Activated B cell treated with CpG ODN at 0.5 μM for 24 hours (primary cell): ENCODE measurements at regions of chr2 and their contacts with region 1.

Region 1: DNA sequence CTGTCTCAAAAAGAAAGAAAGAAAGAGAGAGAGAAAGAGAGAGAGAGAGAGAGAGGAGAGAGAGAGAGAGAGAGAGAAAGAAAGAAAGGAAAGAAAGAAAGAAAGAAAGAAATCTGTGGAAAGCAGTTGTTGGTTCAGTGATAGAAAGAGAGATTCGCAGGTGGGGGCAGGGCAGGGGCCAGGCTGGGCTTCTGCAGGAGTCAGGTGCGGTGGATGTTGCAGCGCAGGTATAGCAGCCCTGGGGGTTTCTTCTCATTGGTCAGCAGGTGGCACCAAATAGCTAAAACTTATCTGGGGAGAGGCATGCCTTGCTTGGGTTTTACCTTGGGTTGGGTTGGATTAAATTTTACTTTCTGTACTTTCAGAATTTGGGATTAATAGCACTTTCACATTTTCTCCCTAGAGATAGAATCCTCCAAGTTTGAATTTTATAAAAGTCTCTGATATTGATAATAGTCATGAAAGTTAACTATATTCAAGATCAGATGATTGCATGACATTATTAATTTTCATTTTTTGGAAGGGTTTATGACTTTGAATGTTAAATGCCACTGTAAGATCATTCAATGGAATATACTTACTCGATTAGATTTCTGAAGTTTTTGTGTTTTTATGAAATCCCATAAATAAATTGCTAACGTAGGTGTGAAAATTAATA is 66.6 kb downstream of the SPTBN1 start:
- DNase-seq: peak; percentile 35
- ATAC-seq: peak; percentile 94
- H3K4me3 Mint-ChIP-seq: no peak overlapping the region
- H3K27ac Mint-ChIP-seq: no peak overlapping the region
- H3K4me1 Mint-ChIP-seq: peaks cover 15% of the 10 kb centered on the region
- H3K27me3 Mint-ChIP-seq: no peaks in the 10 kb centered on the region
- CTCF ChIP-seq: peak; percentile 81

Region 2: DNA sequence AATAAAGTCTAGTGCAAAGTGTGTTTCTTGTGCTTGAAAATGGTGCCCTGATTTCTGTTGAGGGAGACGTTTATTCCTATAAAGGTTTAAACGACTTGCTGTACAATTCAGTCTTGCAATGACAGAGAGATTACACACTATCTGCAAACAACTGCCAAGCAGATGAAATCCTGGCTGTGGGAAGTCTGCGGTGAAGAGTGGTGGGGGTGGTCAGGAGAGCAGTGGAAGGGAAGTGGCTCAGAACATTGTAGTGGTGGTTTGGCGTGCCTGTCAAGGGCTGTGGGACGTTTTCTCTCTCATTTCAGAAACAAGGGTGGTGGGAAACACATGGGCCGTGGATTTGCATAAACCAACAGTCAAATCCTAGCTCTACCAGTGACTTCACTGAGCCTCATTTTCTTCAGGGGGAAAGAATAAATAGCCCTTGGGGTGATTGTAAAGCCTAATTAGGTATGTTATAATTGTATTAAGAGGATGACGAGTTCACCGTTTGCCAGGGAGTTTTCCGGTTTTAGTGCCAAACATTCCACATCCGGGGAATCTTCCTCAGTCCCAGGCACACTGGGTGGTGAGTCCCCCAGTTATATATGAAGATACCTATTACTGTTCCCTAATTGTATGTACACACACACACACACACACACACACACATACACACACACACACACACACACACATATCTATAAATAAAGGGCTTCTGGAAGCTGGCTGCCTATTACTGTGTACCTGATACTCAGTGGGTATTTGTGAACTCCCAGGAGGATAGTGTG is 48.4 kb after region 1 on chr2:
- CTCF ChIA-PET with region 1: no interaction called
- POLR2A ChIA-PET with region 1: interaction called, 3 read pairs
- intact Hi-C with region 1: loop called (anchors 1 kb)
- DNase-seq: no peak
- ATAC-seq: peak; percentile 49
- H3K4me3 Mint-ChIP-seq: peak overlapping the region; percentile 52
- H3K27ac Mint-ChIP-seq: peak overlapping the region; percentile 94
- H3K4me1 Mint-ChIP-seq: peaks cover 96% of the 10 kb centered on the region
- H3K27me3 Mint-ChIP-seq: no peaks in the 10 kb centered on the region
- CTCF ChIP-seq: no peak

Region 3: GRCh38 chr2:54634564-54635511 is 112.1 kb after region 1 on chr2:
- CTCF ChIA-PET with region 1: interaction called, 16 read pairs
- POLR2A ChIA-PET with region 1: interaction called, 6 read pairs
- intact Hi-C with region 1: loop called (anchors 1 kb)
- DNase-seq: peak; percentile 42
- ATAC-seq: peak; percentile 73
- H3K4me3 Mint-ChIP-seq: peak overlapping the region; percentile 47
- H3K27ac Mint-ChIP-seq: peak overlapping the region; percentile 97
- H3K4me1 Mint-ChIP-seq: peaks cover 59% of the 10 kb centered on the region
- H3K27me3 Mint-ChIP-seq: no peaks in the 10 kb centered on the region
- CTCF ChIP-seq: no peak

Region 4: DNA sequence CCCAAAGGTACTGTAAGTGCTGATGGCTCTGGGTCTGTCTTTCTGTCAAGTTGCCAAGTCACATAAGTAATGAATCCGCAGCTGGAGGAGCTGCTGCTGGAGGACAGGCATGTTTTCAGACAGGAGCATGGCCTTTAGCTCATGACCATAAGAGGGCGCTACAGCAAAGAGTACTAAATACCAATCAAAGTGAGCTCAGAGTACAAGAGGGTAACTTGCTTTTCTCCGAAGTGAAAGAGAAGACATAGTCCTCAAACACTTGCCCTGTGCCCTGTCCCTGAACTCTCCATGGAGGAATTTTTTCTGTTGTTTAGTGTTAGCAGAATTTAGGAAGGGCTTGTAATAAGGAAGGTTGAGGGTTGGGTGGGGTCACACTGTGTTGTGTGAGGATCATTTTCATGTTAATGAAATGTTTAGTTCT is 142.7 kb after region 1 on chr2:
- CTCF ChIA-PET with region 1: interaction called, 28 read pairs
- POLR2A ChIA-PET with region 1: no interaction called
- intact Hi-C with region 1: loop called (anchors 2 kb)
- DNase-seq: no peak
- ATAC-seq: peak; percentile 52
- H3K4me3 Mint-ChIP-seq: no peak overlapping the region
- H3K27ac Mint-ChIP-seq: no peak overlapping the region
- H3K4me1 Mint-ChIP-seq: no peaks in the 10 kb centered on the region
- H3K27me3 Mint-ChIP-seq: no peaks in the 10 kb centered on the region
- CTCF ChIP-seq: no peak

Region 5: DNA sequence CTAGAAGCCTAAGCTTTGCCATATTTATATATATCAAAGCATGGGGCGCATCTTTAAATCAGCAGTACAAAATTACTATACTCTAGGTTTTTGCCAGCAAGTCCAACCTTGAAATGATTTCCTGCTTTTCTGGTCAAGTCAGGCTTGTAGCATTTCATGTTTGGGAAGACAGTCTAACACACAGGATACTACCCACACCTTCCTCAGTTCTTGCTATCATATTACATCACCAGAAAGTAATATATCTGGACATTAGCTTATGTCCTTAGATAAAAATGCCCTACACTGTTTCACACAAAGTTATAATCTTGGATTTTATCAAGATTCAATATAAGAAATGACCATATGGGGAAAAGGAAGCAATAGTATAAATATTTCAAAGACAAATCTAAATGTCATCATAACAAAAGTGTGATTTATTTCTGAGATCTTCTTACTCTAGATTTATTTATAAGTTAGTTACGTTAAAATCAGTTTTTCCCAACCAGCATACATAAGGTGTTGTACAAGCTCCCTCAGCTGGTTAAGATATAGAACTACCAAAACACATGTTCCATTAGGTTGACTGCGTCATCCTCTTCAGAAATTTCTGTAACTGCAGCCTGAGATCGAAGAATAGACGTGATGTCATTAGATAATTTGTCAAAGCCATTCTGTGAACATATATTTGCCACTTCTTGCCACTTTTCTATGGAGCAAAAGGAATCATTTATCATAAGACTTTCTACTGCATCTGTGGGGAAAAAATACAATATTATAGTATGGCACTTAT is 652.7 kb after region 1 on chr2:
- CTCF ChIA-PET with region 1: no interaction called
- POLR2A ChIA-PET with region 1: no interaction called
- intact Hi-C with region 1: loop called (anchors 2 kb)
- DNase-seq: no peak
- ATAC-seq: peak; percentile 86
- H3K4me3 Mint-ChIP-seq: peak overlapping the region; percentile 8
- H3K27ac Mint-ChIP-seq: no peak overlapping the region
- H3K4me1 Mint-ChIP-seq: peaks cover 7% of the 10 kb centered on the region
- H3K27me3 Mint-ChIP-seq: no peaks in the 10 kb centered on the region
- CTCF ChIP-seq: no peak